ENCODE measurements at regions of chr2 and their contacts with region 1.

Region 1: DNA sequence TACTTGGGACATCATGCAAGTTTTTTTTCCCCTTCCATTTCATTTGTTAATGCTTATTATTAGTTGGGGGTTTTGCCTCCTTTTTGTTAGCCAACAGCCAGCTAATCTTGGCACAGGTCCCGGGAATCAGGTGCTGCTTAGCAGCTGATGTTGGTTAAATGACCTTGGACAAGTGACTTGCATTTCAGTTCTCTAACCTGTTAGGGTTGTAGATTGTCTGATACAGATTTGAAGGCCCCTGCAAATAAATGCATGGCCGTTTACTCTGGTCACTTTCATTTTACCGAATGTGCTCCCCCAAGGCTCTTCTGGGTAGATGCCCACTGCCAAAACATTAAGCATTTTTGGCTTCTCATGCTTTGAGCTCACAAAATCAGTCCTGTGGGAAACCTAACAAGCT is 120.9 kb downstream of the SPTBN1 start:
- DNase-seq: peak; percentile 74
- H3K4me3 ChIP-seq: no peak overlapping the region
- H3K27ac ChIP-seq: peak overlapping the region in 2 of 4 donors; percentile 29 to 44
- H3K4me1 ChIP-seq: peaks cover 0 to 72% (median 60%) of the 10 kb centered on the region in 4 donors
- H3K27me3 ChIP-seq: no peaks in the 10 kb centered on the region
- CTCF ChIP-seq: no peak
- EP300 ChIP-seq: no peak
- POLR2A ChIP-seq: no peak

Region 2: GRCh38 chr2:53593891-53594585 is 983.0 kb before region 1 on chr2:
- intact Hi-C with region 1: no loop called
- DNase-seq: no peak
- H3K4me3 ChIP-seq: no peak overlapping the region
- H3K27ac ChIP-seq: no peak overlapping the region
- H3K4me1 ChIP-seq: no peaks in the 10 kb centered on the region
- H3K27me3 ChIP-seq: no peaks in the 10 kb centered on the region
- CTCF ChIP-seq: no peak
- EP300 ChIP-seq: no peak
- POLR2A ChIP-seq: no peak

Region 3: DNA sequence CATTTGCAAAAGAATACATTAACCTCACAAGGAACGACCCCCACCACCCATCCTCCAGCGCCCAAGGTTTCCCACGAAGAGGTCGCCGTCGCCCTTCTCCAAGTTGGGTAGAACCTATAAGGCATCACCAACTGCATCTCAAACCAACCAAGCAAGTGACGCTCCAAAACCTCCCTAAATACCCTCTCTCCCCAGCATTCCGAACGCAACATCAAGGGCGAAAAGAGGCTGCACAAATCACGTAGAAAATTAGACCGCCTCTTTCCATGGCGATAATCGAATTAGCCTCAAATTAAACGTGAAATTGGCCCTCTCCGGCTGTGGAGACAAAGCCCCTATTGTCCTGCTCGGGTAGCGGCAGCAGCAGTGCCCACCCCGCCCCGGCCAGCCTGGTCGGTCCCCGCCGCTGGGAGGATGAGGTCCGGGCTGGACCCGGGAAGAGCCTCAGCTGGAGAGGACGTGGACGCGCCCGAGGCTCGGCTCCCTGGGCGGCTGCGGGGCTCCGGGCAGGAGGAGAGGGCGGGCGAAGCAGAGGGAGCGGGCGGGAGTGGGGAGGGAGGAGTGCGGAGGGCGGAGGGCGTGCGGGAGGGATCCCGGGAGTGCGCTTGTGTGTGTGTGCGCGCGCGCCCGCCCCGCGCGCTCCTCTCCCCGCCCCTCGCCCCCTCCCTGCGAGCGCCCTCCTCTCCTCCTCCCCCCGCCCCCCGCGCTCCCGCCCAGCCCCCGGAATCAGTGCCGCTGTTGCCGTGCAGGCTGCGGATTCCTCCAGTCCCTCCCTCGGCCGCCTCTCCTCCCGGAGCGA is 121.3 kb before region 1 on chr2 and contains the start of gene SPTBN1:
- intact Hi-C with region 1: no loop called
- DNase-seq: peak; percentile 97
- H3K4me3 ChIP-seq: peak within 1 kb of the TSS; percentile 79 to 85 (median 83)
- H3K27ac ChIP-seq: peak within 1 kb of the TSS; percentile 96 to 98 (median 96)
- H3K4me1 ChIP-seq: peaks cover 0 to 40% (median 29%) of the 10 kb centered on the region in 4 donors
- H3K27me3 ChIP-seq: no peaks in the 10 kb centered on the region
- CTCF ChIP-seq: no peak
- EP300 ChIP-seq: no peak
- POLR2A ChIP-seq: peak; percentile 57 to 75
- total RNA-seq, gene SPTBN1: 169 to 273 (median 259) TPM

Region 4: DNA sequence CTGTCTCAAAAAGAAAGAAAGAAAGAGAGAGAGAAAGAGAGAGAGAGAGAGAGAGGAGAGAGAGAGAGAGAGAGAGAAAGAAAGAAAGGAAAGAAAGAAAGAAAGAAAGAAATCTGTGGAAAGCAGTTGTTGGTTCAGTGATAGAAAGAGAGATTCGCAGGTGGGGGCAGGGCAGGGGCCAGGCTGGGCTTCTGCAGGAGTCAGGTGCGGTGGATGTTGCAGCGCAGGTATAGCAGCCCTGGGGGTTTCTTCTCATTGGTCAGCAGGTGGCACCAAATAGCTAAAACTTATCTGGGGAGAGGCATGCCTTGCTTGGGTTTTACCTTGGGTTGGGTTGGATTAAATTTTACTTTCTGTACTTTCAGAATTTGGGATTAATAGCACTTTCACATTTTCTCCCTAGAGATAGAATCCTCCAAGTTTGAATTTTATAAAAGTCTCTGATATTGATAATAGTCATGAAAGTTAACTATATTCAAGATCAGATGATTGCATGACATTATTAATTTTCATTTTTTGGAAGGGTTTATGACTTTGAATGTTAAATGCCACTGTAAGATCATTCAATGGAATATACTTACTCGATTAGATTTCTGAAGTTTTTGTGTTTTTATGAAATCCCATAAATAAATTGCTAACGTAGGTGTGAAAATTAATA is 54.3 kb before region 1 on chr2:
- intact Hi-C with region 1: no loop called
- DNase-seq: no peak
- H3K4me3 ChIP-seq: no peak overlapping the region
- H3K27ac ChIP-seq: no peak overlapping the region
- H3K4me1 ChIP-seq: peaks cover 0 to 53% (median 32%) of the 10 kb centered on the region in 4 donors
- H3K27me3 ChIP-seq: no peaks in the 10 kb centered on the region
- CTCF ChIP-seq: peak; percentile 4 to 54 (median 44)
- EP300 ChIP-seq: no peak
- POLR2A ChIP-seq: no peak

Region 5: GRCh38 chr2:54589340-54590215 is 12.5 kb after region 1 on chr2:
- intact Hi-C with region 1: loop called (anchors 2 kb)
- DNase-seq: no peak
- H3K4me3 ChIP-seq: no peak overlapping the region
- H3K27ac ChIP-seq: peak overlapping the region in 3 of 4 donors; percentile 22 to 25 (median 24)
- H3K4me1 ChIP-seq: peaks cover 0 to 27% (median 21%) of the 10 kb centered on the region in 4 donors
- H3K27me3 ChIP-seq: no peaks in the 10 kb centered on the region
- CTCF ChIP-seq: no peak
- EP300 ChIP-seq: no peak
- POLR2A ChIP-seq: no peak

Region 6: GRCh38 chr2:54845514-54845913 is 268.5 kb after region 1 on chr2:
- intact Hi-C with region 1: no loop called
- DNase-seq: no peak
- H3K4me3 ChIP-seq: no peak overlapping the region
- H3K27ac ChIP-seq: no peak overlapping the region
- H3K4me1 ChIP-seq: no peaks in the 10 kb centered on the region
- H3K27me3 ChIP-seq: no peaks in the 10 kb centered on the region
- CTCF ChIP-seq: no peak
- EP300 ChIP-seq: no peak
- POLR2A ChIP-seq: no peak